ENCODE measurements at regions of chr2 and their contacts with region 1.

Region 1: DNA sequence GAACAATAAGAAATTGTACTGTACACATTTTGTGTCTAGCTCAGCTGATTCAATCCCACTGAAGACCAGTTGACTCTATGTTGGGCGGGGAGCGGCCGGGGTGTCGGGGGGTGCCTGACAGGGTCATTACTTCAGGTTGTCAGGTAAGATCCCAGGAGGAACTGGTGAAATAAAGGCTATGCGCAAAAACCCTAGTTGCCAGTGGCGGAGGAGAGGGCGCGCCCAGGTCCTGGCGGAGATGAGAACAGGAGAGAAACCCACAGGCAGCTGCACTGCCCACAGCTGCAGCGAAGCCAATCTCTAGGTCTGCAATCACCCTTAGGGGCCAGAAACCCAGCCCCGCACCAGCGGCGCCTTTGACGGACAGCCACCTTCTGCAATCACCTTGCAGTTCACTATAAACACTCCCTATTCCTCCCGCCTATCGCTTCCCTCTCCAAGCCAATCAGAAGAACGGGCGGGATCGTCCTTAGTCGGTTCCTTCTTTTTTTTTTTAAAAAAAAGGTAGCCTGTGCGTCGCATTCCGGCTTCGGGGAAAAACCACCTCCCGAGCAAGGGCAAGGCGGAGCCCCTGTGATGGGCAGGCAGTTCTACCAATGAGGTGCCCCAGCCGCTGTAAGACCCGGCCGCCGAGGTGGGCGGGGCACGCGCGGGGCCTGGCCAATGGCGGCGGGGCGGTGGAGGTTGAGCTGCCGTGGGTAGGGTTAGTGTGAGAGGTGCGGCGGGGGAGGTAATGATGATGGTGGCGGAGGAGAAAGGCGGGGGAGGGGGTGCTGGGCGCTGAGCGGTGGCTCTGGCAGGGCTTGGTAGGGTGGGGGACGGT is at the start of gene EHBP1:
- DNase-seq: peak; percentile 97 to 99 (median 97)
- H3K4me3 ChIP-seq: peak within 1 kb of the TSS; percentile 80 to 94
- H3K4me3 Mint-ChIP-seq: peak within 1 kb of the TSS; percentile 86 to 96 (median 94)
- H3K27ac ChIP-seq: peak within 1 kb of the TSS; percentile 50
- H3K27ac Mint-ChIP-seq: peak within 1 kb of the TSS; percentile 86 to 97 (median 91)
- H3K4me1 ChIP-seq: peaks cover 43% of the 10 kb centered on the region
- H3K4me1 Mint-ChIP-seq: peaks cover 28 to 39% (median 31%) of the 10 kb centered on the region in 4 donors
- H3K27me3 ChIP-seq: no peaks in the 10 kb centered on the region
- H3K27me3 Mint-ChIP-seq: no peaks in the 10 kb centered on the region
- total RNA-seq, gene EHBP1: 26.8 to 31.9 TPM

Region 2: DNA sequence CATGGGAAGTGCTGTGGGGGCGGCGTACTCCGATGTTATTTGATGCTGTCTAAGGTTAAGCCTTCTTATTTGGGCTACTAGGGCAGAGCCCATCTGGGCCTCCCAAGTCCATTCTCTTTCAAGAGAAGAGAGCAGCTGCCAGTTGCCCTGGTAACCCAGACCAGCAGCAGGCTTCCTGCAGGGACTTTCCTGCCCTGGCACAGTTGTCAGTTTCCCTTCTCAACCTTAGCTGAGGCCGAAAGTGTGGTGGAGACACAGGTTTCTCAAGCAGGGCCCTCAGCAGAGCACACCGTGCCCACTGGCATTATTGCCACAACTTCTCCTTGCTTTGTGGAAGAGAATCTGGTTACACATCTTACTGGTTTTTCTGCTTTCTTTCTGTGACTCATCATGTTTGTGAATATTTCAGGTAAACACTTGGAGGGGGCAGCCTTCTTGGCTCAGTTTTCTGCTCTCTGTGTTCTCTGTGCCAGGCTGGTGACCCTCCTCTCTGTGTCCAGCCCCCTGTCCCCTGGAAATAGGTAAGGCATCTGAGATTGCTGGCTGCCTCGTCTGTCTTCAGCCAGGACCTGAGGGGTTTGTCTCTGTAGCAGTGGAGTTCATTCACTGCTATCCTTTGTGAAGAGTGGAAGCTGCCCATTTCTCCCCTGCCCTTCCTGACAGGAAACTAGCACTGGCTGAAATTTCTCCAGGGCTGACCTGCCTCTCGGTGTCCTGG is 398.3 kb before region 1 on chr2:
- CTCF ChIA-PET with region 1: no interaction called
- POLR2A ChIA-PET with region 1: no interaction called
- intact Hi-C with region 1: loop called (anchors 5 kb)
- DNase-seq: peak; percentile 17 to 60 (median 29)
- H3K4me3 ChIP-seq: no peak overlapping the region
- H3K4me3 Mint-ChIP-seq: peak overlapping the region in 7 of 8 donors; percentile 20 to 75 (median 50)
- H3K27ac ChIP-seq: peak overlapping the region; percentile 2
- H3K27ac Mint-ChIP-seq: peak overlapping the region; percentile 79 to 91 (median 82)
- H3K4me1 ChIP-seq: peaks cover 75% of the 10 kb centered on the region
- H3K4me1 Mint-ChIP-seq: peaks cover 58 to 90% (median 72%) of the 10 kb centered on the region in 4 donors
- H3K27me3 ChIP-seq: no peaks in the 10 kb centered on the region
- H3K27me3 Mint-ChIP-seq: no peaks in the 10 kb centered on the region

Region 3: DNA sequence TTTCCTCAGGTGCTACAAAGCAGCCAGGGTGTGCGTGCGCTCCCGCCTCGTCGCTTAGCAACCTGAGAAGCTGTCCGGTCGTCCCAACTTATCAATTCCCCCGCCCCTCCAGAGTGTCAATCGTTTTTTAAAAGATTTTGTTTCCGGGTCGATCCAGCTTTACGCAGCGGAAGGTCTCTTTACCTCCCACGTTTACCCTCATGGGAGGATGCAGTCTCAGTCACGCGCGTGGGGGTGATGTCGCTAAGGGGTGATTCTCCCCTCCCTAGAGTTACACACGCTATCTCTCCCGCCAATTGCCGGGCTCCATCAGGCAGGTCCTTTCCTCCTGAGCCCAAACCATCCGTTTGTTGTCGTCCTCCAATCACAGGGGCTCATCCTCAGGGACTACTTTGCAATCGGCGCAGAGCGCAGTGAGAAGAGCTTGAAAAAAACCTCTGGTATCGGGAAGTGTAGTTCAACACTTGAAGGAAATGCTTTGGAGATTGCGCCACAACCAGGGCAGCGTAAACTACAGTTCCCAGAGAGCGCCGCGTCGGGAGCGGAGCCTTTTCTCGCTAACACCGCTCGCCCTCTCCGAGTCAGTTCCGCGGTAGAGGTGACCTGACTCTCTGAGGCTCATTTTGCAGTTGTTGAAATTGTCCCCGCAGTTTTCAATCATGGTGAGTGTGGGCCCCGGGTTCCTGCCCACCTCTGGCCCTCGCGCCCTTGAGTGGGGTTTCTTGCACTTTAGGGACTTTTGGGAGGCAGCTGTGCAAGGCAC is 883.3 kb after region 1 on chr2 and contains the starts of genes MDH1 and WDPCP:
- CTCF ChIA-PET with region 1: no interaction called
- POLR2A ChIA-PET with region 1: interaction called, 3 read pairs
- intact Hi-C with region 1: loop called (anchors 1 kb)
- DNase-seq: peak; percentile 93 to 99 (median 97)
- H3K4me3 ChIP-seq: peak within 1 kb of the TSS; percentile 78 to 96
- H3K4me3 Mint-ChIP-seq: peak within 1 kb of the TSS; percentile 89 to 96 (median 95)
- H3K27ac ChIP-seq: peak within 1 kb of the TSS; percentile 82
- H3K27ac Mint-ChIP-seq: peak within 1 kb of the TSS; percentile 92 to 99 (median 98)
- H3K4me1 ChIP-seq: peaks cover 32% of the 10 kb centered on the region
- H3K4me1 Mint-ChIP-seq: peaks cover 20 to 54% (median 43%) of the 10 kb centered on the region in 4 donors
- H3K27me3 ChIP-seq: no peaks in the 10 kb centered on the region
- H3K27me3 Mint-ChIP-seq: no peaks in the 10 kb centered on the region
- total RNA-seq, gene MDH1: 93.8 to 102 TPM
- total RNA-seq, gene WDPCP: 10.5 to 13.2 TPM